ENCODE measurements at regions of chr1 and their contacts with region 1.

Region 1: GRCh38 chr1:41416552-41417334 is 55.5 kb downstream of the FOXO6 start:
- DNase-seq: peak; percentile 38 to 77 (median 67)
- ATAC-seq: peak; percentile 38
- H3K4me3 ChIP-seq: no peak overlapping the region
- H3K4me3 Mint-ChIP-seq: no peak overlapping the region
- H3K27ac ChIP-seq: no peak overlapping the region
- H3K27ac Mint-ChIP-seq: no peak overlapping the region
- H3K4me1 ChIP-seq: no peaks in the 10 kb centered on the region
- H3K4me1 Mint-ChIP-seq: no peaks in the 10 kb centered on the region
- H3K27me3 ChIP-seq: no peaks in the 10 kb centered on the region
- H3K27me3 Mint-ChIP-seq: peaks cover 6% of the 10 kb centered on the region
- CTCF ChIP-seq: peak; percentile 69

Region 2: GRCh38 chr1:41268154-41268770 is 148.5 kb before region 1 on chr1:
- CTCF ChIA-PET with region 1: interaction called, 20 read pairs
- POLR2A ChIA-PET with region 1: no interaction called
- intact Hi-C with region 1: loop called in 1 of 2 experiments (anchors 1 kb)
- DNase-seq: peak; percentile 29 to 80 (median 70)
- ATAC-seq: peak; percentile 67
- H3K4me3 ChIP-seq: no peak overlapping the region
- H3K4me3 Mint-ChIP-seq: no peak overlapping the region
- H3K27ac ChIP-seq: no peak overlapping the region
- H3K27ac Mint-ChIP-seq: no peak overlapping the region
- H3K4me1 ChIP-seq: no peaks in the 10 kb centered on the region
- H3K4me1 Mint-ChIP-seq: no peaks in the 10 kb centered on the region
- H3K27me3 ChIP-seq: no peaks in the 10 kb centered on the region
- H3K27me3 Mint-ChIP-seq: peaks cover 2% of the 10 kb centered on the region
- CTCF ChIP-seq: peak; percentile 96

Region 3: DNA sequence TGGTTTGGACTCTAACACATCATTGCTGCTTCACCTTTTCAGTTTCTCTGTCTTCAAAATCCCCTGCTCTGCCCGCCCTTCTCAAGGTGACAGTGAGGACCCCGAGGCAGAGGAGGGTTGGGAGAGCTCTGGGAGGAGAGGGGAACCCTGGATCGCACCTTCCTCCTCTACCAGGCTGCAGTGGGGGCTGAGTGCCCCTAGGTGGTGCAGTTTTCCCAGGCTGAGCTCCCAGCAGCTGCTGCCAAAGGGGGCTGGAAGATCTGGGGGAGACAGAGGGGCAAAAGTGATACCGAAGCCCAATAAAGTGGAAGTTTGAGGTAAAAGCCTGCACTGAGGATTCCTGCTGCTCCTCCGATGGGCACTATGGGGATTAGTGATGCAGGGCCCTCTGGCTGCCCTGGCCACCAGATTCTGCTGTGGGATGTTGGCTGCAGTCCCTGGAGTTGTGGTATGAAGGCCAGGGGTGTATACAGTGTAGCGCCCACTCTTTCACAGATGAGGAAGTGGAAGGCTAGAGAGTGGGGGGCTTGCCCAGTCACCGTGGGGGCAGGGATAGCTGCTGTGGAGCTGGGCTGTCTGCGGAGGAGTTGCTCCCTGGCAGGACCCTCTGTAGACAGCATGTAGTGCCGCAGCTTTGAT is 133.9 kb before region 1 on chr1:
- CTCF ChIA-PET with region 1: interaction called, 42 read pairs
- POLR2A ChIA-PET with region 1: no interaction called
- intact Hi-C with region 1: loop called in 1 of 2 experiments (anchors 1 kb)
- DNase-seq: peak in 5 of 9 experiments; percentile 7 to 47 (median 30)
- ATAC-seq: no peak
- H3K4me3 ChIP-seq: no peak overlapping the region
- H3K4me3 Mint-ChIP-seq: no peak overlapping the region
- H3K27ac ChIP-seq: no peak overlapping the region
- H3K27ac Mint-ChIP-seq: no peak overlapping the region
- H3K4me1 ChIP-seq: no peaks in the 10 kb centered on the region
- H3K4me1 Mint-ChIP-seq: no peaks in the 10 kb centered on the region
- H3K27me3 ChIP-seq: no peaks in the 10 kb centered on the region
- H3K27me3 Mint-ChIP-seq: peaks cover 39% of the 10 kb centered on the region
- CTCF ChIP-seq: peak; percentile 41

Region 4: DNA sequence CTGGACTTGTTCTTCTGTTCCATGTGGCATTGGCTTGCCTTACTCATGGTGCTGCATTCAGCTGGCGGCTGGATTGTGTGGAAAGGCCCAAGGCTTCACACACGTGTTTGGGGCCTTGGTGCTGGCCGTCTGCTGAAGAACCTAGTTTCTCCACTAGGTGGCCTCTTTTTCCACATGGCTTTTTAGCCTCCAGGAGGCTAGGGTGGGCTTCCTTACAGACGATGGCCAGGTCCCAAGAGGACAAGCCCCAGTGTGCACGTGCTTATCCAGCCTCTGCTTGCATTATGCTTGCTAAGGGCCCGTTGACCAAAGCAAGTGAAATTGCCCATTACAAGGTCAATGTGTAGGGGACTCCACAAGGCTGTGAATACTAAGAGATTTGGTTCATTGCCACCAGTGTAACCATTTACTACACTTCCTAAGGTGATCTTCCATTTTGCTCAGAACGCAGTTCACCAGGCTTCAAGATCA is 103.0 kb before region 1 on chr1:
- CTCF ChIA-PET with region 1: interaction called, 10 read pairs
- POLR2A ChIA-PET with region 1: no interaction called
- intact Hi-C with region 1: no loop called
- DNase-seq: peak in 4 of 9 experiments; percentile 16 to 51 (median 36)
- ATAC-seq: peak; percentile 40
- H3K4me3 ChIP-seq: no peak overlapping the region
- H3K4me3 Mint-ChIP-seq: no peak overlapping the region
- H3K27ac ChIP-seq: no peak overlapping the region
- H3K27ac Mint-ChIP-seq: no peak overlapping the region
- H3K4me1 ChIP-seq: no peaks in the 10 kb centered on the region
- H3K4me1 Mint-ChIP-seq: no peaks in the 10 kb centered on the region
- H3K27me3 ChIP-seq: no peaks in the 10 kb centered on the region
- H3K27me3 Mint-ChIP-seq: no peaks in the 10 kb centered on the region
- CTCF ChIP-seq: peak; percentile 55

Region 5: GRCh38 chr1:41322835-41323627 is 93.7 kb before region 1 on chr1:
- CTCF ChIA-PET with region 1: interaction called, 13 read pairs
- POLR2A ChIA-PET with region 1: no interaction called
- intact Hi-C with region 1: loop called (anchors 1 kb)
- DNase-seq: peak in 5 of 9 experiments; percentile 27 to 53 (median 38)
- ATAC-seq: no peak
- H3K4me3 ChIP-seq: no peak overlapping the region
- H3K4me3 Mint-ChIP-seq: no peak overlapping the region
- H3K27ac ChIP-seq: no peak overlapping the region
- H3K27ac Mint-ChIP-seq: no peak overlapping the region
- H3K4me1 ChIP-seq: no peaks in the 10 kb centered on the region
- H3K4me1 Mint-ChIP-seq: no peaks in the 10 kb centered on the region
- H3K27me3 ChIP-seq: no peaks in the 10 kb centered on the region
- H3K27me3 Mint-ChIP-seq: no peaks in the 10 kb centered on the region
- CTCF ChIP-seq: no peak

Region 6: DNA sequence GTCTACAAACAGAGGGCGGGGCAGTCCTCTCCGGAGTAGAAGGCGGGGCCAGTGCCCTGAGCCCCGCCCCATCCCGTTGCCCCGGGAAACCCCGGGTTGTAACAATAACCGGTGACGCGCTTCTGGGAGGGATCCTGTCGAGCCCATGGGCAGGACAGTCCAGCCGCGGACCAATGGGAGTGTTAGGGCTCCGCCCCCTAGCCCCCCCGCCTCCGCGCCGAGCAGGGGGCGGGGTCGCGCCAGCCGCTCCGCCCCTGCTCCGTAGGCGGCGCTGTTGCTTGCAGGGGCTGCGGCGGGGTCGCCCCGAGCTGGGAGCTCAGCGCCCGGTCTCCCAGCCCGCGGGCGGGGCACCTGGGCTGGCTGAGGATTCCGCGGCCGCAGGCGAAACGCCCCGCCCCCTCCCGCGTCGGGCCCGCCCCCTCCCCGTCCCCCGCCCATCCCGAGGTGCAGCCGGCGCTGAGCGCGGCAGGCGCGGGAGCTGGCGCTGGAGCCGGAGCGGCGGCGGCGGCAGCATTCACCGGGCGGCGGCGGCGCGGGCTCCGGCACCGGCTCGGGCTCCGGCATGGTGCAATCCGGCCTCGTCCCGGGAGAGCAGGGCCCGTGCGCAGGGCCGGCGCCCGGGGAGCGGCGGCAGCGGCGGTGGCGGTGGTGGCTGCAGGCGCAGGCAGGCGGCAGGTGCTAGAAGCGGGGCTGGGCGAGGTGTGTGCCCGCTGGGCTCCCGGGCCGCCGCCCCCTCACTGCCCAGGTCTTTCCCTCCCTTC is 55.6 kb before region 1 on chr1 and contains the start of gene FOXO6:
- CTCF ChIA-PET with region 1: interaction called, 8 read pairs
- POLR2A ChIA-PET with region 1: no interaction called
- intact Hi-C with region 1: loop called in 1 of 2 experiments (anchors 1 kb)
- DNase-seq: peak; percentile 85 to 97 (median 94)
- ATAC-seq: peak; percentile 90
- H3K4me3 ChIP-seq: peak within 1 kb of the TSS; percentile 35 to 52
- H3K4me3 Mint-ChIP-seq: peak within 1 kb of the TSS; percentile 82
- H3K27ac ChIP-seq: peak within 1 kb of the TSS; percentile 14 to 25
- H3K27ac Mint-ChIP-seq: peak within 1 kb of the TSS; percentile 28
- H3K4me1 ChIP-seq: peaks cover 22% of the 10 kb centered on the region
- H3K4me1 Mint-ChIP-seq: peaks cover 23% of the 10 kb centered on the region
- H3K27me3 ChIP-seq: peaks cover 10 to 11% of the 10 kb centered on the region in 2 experiments
- H3K27me3 Mint-ChIP-seq: peaks cover 29% of the 10 kb centered on the region
- CTCF ChIP-seq: no peak
- total RNA-seq, gene FOXO6: 1.4 to 1.7 TPM

Region 7: DNA sequence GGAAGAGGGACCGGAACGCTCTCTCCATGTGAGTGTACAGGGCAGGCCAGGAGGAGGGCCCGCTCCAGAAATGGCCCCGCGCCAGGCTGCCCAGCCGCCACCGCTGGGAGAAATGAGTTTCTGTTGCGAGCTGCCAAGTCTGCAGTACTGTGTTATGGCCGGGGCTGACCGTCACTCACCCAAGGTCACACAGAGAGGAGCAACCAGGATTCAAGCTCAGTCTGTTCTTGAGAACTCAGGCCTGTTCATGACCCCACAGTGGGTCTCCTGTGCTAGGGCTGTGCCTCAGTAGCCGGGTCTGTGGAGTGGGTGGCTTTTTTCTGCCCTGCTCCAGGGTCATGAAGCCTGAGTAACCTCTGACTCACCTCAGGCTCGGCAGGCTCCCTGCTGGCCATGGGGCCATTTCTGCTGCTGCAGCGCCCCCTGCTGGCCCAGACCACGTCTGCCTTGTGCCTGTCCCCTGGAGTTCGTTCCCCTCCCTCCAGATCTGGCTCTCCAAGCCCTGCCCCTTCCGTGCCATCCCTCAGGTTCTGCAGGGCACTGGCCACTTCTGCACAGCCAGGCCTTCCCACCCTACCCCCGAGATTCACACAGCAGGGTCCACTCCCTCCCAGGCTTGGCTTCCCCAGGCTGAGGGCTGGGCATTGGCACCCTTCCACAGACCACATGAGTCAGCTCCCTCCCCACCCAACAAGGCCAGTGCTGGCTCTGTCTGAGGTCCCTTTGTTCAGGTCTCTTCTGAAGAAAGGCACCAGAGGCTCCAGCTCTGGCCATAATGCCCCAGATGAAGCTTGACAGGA is 15.9 kb after region 1 on chr1:
- CTCF ChIA-PET with region 1: interaction called, 12 read pairs
- POLR2A ChIA-PET with region 1: no interaction called
- intact Hi-C with region 1: no loop called
- DNase-seq: peak; percentile 45 to 76 (median 64)
- ATAC-seq: peak; percentile 40
- H3K4me3 ChIP-seq: no peak overlapping the region
- H3K4me3 Mint-ChIP-seq: no peak overlapping the region
- H3K27ac ChIP-seq: no peak overlapping the region
- H3K27ac Mint-ChIP-seq: no peak overlapping the region
- H3K4me1 ChIP-seq: no peaks in the 10 kb centered on the region
- H3K4me1 Mint-ChIP-seq: no peaks in the 10 kb centered on the region
- H3K27me3 ChIP-seq: no peaks in the 10 kb centered on the region
- H3K27me3 Mint-ChIP-seq: peaks cover 31% of the 10 kb centered on the region
- CTCF ChIP-seq: peak; percentile 53

Region 8: GRCh38 chr1:41496080-41497055 is 79.6 kb after region 1 on chr1:
- CTCF ChIA-PET with region 1: no interaction called
- POLR2A ChIA-PET with region 1: no interaction called
- intact Hi-C with region 1: no loop called
- DNase-seq: peak in 1 of 9 experiments; percentile 16
- ATAC-seq: no peak
- H3K4me3 ChIP-seq: no peak overlapping the region
- H3K4me3 Mint-ChIP-seq: no peak overlapping the region
- H3K27ac ChIP-seq: no peak overlapping the region
- H3K27ac Mint-ChIP-seq: no peak overlapping the region
- H3K4me1 ChIP-seq: no peaks in the 10 kb centered on the region
- H3K4me1 Mint-ChIP-seq: peaks cover 3% of the 10 kb centered on the region
- H3K27me3 ChIP-seq: peaks cover 0 to 8% of the 10 kb centered on the region in 2 experiments
- H3K27me3 Mint-ChIP-seq: peaks cover 18% of the 10 kb centered on the region
- CTCF ChIP-seq: no peak